HepG2 (cell line): ENCODE measurements at regions of chr2 and their contacts with region 1.

Region 1: GRCh38 chr2:217886720-217887309 is 116.0 kb downstream of the TNS1 start:
- DNase-seq: peak; percentile 79
- ATAC-seq: peak; percentile 84
- H3K4me3 ChIP-seq: no peak overlapping the region
- H3K27ac ChIP-seq: no peak overlapping the region
- H3K4me1 ChIP-seq: peaks cover 19% of the 10 kb centered on the region
- H3K27me3 ChIP-seq: no peaks in the 10 kb centered on the region
- CTCF ChIP-seq: peak; percentile 94
- EP300 ChIP-seq: no peak
- POLR2A ChIP-seq: no peak
- RAD21 ChIP-seq: peak; percentile 85

Region 2: GRCh38 chr2:217899231-217900009 is 12.6 kb after region 1 on chr2:
- CTCF ChIA-PET with region 1: interaction called, 16 read pairs
- POLR2A ChIA-PET with region 1: interaction called, 10 read pairs
- in situ Hi-C with region 1: no loop called
- intact Hi-C with region 1: loop called (anchors 1 kb)
- DNase-seq: peak; percentile 86
- ATAC-seq: peak; percentile 55
- H3K4me3 ChIP-seq: peak overlapping the region; percentile 48 to 63 (median 62); a peak in 5 of 6 replicates
- H3K27ac ChIP-seq: peak overlapping the region; percentile 89
- H3K4me1 ChIP-seq: peaks cover 69% of the 10 kb centered on the region
- H3K27me3 ChIP-seq: no peaks in the 10 kb centered on the region
- CTCF ChIP-seq: peak; percentile 94
- EP300 ChIP-seq: no peak
- POLR2A ChIP-seq: no peak
- RAD21 ChIP-seq: peak; percentile 80

Region 3: DNA sequence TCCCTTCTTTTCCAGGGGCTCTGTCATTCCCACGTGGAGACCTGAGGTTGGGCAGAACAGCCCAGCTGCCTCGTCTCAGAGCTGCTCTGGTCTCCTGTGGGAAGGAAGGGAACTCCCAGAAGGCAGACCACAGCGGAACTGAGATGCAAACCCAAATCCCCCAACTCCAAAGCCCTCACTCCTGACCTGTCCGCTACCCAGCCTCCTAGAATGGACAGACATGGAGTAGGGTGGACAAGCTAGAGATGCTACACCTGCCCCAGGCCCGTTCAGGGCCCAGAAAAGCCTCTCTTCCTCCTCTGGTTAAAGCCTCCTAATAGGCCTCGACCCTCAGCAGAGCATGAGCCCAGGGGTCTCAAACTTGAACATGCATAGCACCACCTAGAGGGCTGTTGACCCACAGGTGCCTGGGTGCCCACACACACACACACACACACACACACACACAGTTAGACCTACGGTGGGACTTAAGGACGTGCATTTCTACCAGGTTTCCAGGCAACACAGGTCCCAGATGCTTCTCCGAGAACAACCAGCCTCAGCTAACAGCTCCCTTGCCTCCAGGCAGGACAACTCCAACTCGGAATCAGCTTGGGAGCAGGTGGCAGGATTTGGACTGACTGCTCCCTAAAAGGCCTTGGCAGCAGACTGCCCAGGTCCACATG is 22.5 kb after region 1 on chr2:
- CTCF ChIA-PET with region 1: interaction called, 5 read pairs
- POLR2A ChIA-PET with region 1: no interaction called
- in situ Hi-C with region 1: no loop called
- intact Hi-C with region 1: loop called (anchors 1 kb)
- DNase-seq: peak; percentile 38
- ATAC-seq: peak; percentile 44
- H3K4me3 ChIP-seq: no peak overlapping the region
- H3K27ac ChIP-seq: no peak overlapping the region
- H3K4me1 ChIP-seq: peaks cover 84% of the 10 kb centered on the region
- H3K27me3 ChIP-seq: no peaks in the 10 kb centered on the region
- CTCF ChIP-seq: peak; percentile 73
- EP300 ChIP-seq: no peak
- POLR2A ChIP-seq: no peak
- RAD21 ChIP-seq: 0 out of 2 replicates have a peak, but pooled peaks have one; percentile 16

Region 4: GRCh38 chr2:217922101-217923006 is 35.5 kb after region 1 on chr2:
- CTCF ChIA-PET with region 1: interaction called, 7 read pairs
- POLR2A ChIA-PET with region 1: no interaction called
- in situ Hi-C with region 1: no loop called
- intact Hi-C with region 1: loop called (anchors 1 kb)
- DNase-seq: no peak
- ATAC-seq: peak; percentile 77
- H3K4me3 ChIP-seq: no peak overlapping the region; a peak in 1 of 6 replicates
- H3K27ac ChIP-seq: no peak overlapping the region
- H3K4me1 ChIP-seq: peaks cover 60% of the 10 kb centered on the region
- H3K27me3 ChIP-seq: no peaks in the 10 kb centered on the region
- CTCF ChIP-seq: peak; percentile 87
- EP300 ChIP-seq: no peak
- POLR2A ChIP-seq: no peak
- RAD21 ChIP-seq: peak; percentile 74

Region 5: DNA sequence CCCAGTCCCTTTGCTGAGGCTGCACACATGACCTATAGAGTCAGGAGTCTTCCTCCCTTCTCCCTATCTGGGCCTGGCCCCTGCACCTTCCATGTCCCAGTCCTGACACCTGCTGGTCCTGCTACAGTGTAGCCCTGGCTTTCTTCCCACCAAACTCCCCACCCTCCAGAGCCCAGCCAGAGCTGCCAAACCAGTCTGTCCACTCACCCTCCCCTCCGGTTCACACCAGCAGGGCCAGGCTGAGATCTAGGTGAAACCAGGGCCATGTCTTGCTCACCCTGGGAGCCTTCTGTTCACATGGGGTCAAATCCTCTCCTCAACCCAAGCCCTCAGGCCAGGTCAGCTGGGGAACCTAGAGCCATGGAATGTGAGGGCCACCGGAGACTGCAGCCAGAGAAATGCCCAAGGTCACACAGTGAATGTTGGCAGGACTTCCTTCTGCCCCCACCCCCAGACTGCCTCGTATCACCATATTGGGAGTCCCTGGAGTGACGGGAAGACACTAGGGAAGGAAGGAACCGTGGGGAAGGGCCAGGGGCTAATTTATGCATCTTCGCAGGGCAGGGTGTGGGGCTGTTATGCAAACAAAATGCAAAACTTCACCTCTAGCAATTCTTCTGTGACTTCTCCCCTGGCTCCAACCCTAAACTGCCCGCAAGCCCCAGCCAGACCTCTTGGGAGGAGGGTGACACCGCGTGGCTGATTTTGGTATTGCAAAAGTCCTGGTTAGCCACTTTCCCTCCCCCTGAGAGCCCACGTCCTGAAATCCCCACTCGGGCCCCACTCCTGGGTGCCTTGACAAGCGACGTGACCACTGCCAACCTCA is 101.4 kb after region 1 on chr2:
- CTCF ChIA-PET with region 1: interaction called, 14 read pairs
- POLR2A ChIA-PET with region 1: no interaction called
- in situ Hi-C with region 1: loop called (anchors 5 kb)
- intact Hi-C with region 1: loop called (anchors 1 kb)
- DNase-seq: peak; percentile 58
- ATAC-seq: peak; percentile 87
- H3K4me3 ChIP-seq: no peak overlapping the region; a peak in 1 of 6 replicates
- H3K27ac ChIP-seq: no peak overlapping the region
- H3K4me1 ChIP-seq: peaks cover 10% of the 10 kb centered on the region
- H3K27me3 ChIP-seq: peaks cover 4 to 16% of the 10 kb centered on the region in 2 experiments; a peak in 2 of 5 replicates
- CTCF ChIP-seq: peak; percentile 96
- EP300 ChIP-seq: no peak
- POLR2A ChIP-seq: no peak
- RAD21 ChIP-seq: peak; percentile 95

Region 6: GRCh38 chr2:217993817-217994463 is 107.1 kb after region 1 on chr2:
- CTCF ChIA-PET with region 1: interaction called, 14 read pairs
- POLR2A ChIA-PET with region 1: no interaction called
- in situ Hi-C with region 1: loop called (anchors 5 kb)
- intact Hi-C with region 1: no loop called
- DNase-seq: peak; percentile 28
- ATAC-seq: peak; percentile 91
- H3K4me3 ChIP-seq: no peak overlapping the region
- H3K27ac ChIP-seq: no peak overlapping the region
- H3K4me1 ChIP-seq: peaks cover 15% of the 10 kb centered on the region
- H3K27me3 ChIP-seq: peaks cover 9 to 48% of the 10 kb centered on the region in 2 experiments; a peak in 4 of 5 replicates
- CTCF ChIP-seq: peak; percentile 85
- EP300 ChIP-seq: no peak
- POLR2A ChIP-seq: no peak
- RAD21 ChIP-seq: peak; percentile 40; the same call in 1 of the 2 replicates